ENCODE measurements at regions of chr6 and their contacts with region 1.

Region 1: GRCh38 chr6:17820055-17820454 is 113.3 kb upstream of the NUP153 start:
- DNase-seq: no peak
- H3K4me3 ChIP-seq: no peak overlapping the region
- H3K4me1 ChIP-seq: no peaks in the 10 kb centered on the region
- H3K27me3 ChIP-seq: no peaks in the 10 kb centered on the region

Region 2: DNA sequence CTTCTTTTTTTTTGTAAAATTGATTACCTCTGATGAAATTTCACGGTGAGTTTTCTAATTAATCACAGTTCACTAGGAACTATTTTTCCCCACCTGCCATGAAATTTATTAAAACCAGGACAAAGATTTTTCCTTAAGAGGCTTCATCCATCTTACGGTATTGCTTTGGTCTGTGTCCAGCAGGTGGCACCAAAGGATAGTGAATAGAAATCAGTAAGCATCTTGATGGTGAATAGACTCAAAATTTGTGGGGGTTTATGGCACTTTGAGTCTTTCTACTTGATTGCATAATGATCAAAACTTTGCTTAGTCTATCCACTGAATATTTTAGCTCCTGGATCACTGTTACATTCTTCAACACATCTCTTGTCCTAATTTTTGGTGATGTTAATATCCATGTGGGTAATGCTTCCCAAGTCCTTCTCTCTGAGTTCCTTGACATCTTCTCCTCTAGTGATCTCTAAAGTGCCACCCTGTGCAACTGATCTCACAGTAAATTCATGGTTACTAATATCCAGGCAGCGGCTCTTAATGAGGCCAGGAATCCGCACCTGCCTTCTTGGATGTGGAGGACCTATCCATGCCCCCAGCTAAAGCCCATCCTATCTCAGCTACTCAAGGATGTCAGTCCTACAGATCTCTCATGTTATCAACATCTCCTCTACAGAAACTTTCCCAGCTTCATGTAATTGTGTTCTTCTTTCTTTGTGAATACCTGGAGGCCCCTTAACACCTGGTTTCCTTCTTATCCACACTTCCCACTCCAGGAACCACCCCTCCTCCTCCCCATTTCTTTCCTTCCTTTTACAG is 663.7 kb before region 1 on chr6:
- in situ Hi-C with region 1: loop called (anchors 10 kb)
- DNase-seq: peak; percentile 72 to 81
- H3K4me3 ChIP-seq: no peak overlapping the region
- H3K4me1 ChIP-seq: no peaks in the 10 kb centered on the region
- H3K27me3 ChIP-seq: no peaks in the 10 kb centered on the region

Region 3: DNA sequence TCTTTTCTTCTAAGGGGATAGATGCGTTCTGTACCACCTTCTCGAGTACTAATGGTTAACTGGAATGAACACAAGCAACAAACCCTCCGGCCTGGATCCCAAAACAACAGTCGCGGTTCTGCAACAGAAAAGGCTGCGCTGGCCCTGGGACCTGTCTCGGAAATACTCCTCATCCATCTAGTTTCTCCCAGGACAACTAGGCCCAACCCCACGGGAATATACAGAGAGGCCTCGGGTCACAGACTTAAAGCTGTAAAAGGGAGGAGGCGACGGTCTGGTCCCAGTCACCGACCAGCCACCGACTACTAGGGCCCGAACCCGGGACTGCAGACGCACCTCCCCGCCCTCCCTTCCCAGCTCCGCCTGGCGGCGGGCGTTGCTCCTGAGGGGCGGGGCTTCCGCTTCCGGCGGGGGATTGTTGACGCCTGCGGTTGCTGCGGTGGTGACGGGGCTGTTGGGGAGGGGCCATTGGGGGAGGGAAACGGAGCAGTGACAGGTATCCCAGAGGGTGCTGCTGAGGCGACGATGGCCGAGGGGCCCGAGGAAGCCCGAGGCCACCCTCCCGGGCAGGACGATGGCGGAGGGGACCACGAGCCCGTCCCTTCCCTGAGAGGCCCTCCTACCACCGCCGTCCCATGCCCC is 220.0 kb before region 1 on chr6 and contains the start of gene FAM8A1:
- in situ Hi-C with region 1: loop called (anchors 25 kb)
- DNase-seq: peak; percentile 89 to 98
- H3K4me3 ChIP-seq: peak within 1 kb of the TSS; percentile 65
- H3K4me1 ChIP-seq: peaks cover 6% of the 10 kb centered on the region
- H3K27me3 ChIP-seq: peaks cover 3% of the 10 kb centered on the region; the same call in 1 of the 2 replicates

Region 4: DNA sequence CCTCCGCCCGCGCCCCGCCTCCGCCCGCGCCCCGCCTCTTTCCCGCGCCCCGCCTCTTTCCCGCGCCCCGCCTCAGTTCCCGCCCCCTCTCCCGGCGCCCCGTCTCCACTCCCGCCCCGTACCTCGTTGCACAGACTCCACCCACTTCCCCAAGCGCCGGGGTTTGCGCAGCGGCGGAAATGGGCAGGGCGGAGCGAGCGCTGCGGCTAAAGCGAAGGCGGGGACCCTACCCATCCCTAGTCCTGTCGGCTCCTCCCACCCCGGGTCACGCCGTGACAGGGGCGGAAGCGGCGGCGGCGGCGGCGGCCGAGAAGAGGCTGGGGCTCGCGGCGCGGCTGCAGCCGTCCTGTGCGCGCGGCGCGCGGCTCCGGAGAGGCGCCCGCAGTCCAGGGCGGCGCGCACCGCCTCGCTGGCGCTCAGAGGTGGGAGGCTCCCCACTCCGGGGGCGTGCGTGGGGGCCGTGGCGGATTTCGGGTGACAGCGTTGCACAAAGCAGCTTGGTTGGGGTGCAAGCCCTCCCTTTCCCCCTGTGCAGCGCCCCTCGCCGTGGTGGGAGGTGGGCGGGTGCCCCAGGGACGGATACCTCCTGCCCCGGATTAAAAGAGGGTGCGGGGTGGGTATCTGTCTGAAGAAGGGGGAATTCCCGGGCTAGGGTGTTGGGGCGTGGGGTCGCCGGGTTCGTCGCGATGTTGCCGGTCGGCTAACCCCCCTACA is 335.3 kb after region 1 on chr6 and contains the start of gene KDM1B:
- in situ Hi-C with region 1: no loop called
- DNase-seq: peak; percentile 95 to 99
- H3K4me3 ChIP-seq: peak within 1 kb of the TSS; percentile 86
- H3K4me1 ChIP-seq: peaks cover 3% of the 10 kb centered on the region
- H3K27me3 ChIP-seq: no peaks in the 10 kb centered on the region

Measured in HAP-1 (cell line).